Left ventricle myocardium superior (tissue), 1 donor: ENCODE measurements at regions of chr3 and their contacts with region 1.

Region 1: DNA sequence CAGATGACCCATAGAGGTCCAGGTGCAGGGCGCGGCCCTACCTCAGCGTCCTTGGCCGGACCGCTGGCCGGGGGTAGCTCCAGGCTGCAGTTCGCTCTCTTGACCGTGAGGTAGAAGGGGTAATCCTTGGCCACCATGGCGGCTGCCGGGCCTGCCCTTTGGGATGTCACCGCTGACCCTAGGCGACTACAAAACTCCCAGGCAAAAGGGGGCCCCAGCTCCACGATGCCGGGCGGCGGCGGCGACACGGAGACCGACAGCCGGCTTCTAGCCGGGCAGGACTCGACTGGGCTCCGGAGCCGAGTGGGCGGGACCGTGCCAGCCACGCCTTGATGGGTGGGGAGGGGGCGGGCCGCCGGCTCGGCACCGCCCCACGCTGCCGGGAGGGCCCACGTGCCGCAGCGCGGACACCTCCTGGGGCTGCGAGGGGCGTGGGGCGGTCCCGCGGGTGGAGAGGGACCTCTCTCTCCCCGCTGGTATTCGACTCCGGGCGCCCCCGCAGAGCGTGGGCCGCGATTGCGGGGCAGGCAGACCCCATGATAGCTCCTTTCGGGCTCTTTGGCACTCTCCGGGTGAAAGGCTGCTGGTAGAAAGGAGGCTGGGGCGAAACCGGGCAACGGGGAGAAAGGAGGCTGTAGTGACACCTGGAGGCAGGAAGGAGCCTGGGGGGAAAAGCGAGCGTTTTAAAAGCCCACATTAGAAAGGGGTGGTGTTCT is at the start of gene ARHGEF3:
- DNase-seq: peak; percentile 93
- ATAC-seq: peak; percentile 96
- total RNA-seq, gene ARHGEF3: 17.6 TPM

Region 2: DNA sequence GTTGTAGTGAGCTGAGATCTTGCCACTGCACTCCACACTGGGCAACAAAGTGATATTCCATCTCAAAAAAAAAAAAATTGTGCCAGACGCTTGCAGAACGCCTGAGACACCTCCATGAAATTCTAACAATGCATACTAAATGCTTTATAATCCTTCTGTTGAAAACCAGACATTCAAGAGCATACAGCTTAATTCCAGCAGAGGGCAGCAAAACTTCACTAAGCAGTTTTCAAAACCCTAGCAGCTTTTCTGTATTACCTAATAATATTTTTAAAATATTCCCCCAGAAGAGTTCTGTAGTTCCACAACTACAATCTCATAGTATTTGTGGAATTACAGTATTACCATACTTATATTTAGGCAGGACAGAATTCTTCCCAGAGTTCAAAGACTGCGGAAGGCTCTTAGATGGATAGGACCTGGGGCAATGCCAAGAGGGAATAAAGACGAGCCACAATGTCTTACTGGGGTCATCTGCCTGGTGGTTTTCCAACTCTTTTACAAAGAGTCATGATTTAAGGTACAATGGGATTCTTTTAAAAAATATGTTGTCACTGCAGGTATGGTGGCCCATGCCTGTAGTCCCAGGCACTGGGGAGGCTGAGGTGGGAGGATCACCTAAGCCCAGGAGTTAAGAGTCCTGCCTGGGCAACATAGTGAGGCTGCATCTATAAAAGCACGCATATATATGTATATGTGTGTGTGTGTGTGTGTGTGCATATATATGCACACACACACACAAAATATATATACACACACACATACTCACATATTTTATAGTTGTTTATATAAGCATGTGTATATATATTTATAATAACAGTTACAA is 99.1 kb before region 1 on chr3:
- intact Hi-C with region 1: loop called (anchors 2 kb)
- DNase-seq: no peak
- ATAC-seq: peak; percentile 70

Region 3: DNA sequence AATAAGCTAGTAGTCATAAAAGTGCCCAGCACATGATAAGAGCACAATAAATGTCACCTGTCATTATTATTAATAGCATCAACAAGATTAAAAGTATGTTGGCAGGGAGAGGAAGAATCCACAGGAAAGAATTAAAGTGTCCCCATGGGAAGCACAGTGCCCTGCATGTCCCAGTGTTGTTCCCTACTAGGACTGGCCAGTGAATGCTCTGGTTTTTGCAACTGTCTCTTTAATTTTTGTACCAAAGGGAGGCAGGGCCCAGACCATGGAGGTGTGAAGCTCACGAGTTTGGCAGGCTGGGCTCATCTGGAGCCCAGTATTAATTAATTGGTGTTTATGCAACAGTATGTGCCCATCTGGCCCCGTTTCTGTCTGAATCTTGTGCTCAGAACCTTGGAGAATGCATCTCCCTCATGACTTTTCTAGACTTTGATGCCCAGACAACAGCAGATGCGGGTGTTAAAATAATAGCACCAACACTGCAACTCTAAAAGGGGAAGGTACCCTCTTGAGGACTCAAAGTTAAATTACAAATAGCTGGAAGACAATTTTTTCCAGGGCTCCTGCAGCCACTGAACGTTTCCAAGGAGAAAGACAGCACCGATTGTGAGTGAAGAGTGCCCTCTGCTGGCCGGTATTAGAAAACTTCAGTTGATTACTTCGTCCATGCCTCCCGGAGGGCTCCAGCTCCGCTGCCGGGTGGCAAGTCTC is 186.8 kb after region 1 on chr3:
- intact Hi-C with region 1: loop called (anchors 10 kb)
- DNase-seq: peak; percentile 66
- ATAC-seq: peak; percentile 85